ENCODE measurements at regions of chr4 and their contacts with region 1.

Region 1: GRCh38 chr4:166091912-166092510 is 219.0 kb downstream of the TLL1 start:
- DNase-seq: peak in 1 of 7 donors; percentile 2
- H3K4me3 ChIP-seq: no peak overlapping the region
- H3K27ac ChIP-seq: no peak overlapping the region
- H3K4me1 ChIP-seq: no peaks in the 10 kb centered on the region
- H3K27me3 ChIP-seq: no peaks in the 10 kb centered on the region
- CTCF ChIP-seq: peak; percentile 39 to 74 (median 62)
- POLR2A ChIP-seq: no peak

Region 2: GRCh38 chr4:165493359-165493758 is 598.7 kb before region 1 on chr4:
- intact Hi-C with region 1: loop called in 1 of 2 experiments (anchors 5 kb)
- DNase-seq: peak; percentile 70 to 84 (median 75)
- H3K4me3 ChIP-seq: peak overlapping the region in 1 of 4 donors; percentile 20
- H3K27ac ChIP-seq: no peak overlapping the region
- H3K4me1 ChIP-seq: peaks cover 0 to 4% of the 10 kb centered on the region in 2 donors
- H3K27me3 ChIP-seq: no peaks in the 10 kb centered on the region
- CTCF ChIP-seq: peak; percentile 28 to 71 (median 61)
- POLR2A ChIP-seq: no peak

Region 3: GRCh38 chr4:165537028-165537648 is 554.9 kb before region 1 on chr4:
- intact Hi-C with region 1: loop called (anchors 2 to 10 kb)
- DNase-seq: peak in 2 of 7 donors; percentile 8 to 11
- H3K4me3 ChIP-seq: no peak overlapping the region
- H3K27ac ChIP-seq: no peak overlapping the region
- H3K4me1 ChIP-seq: no peaks in the 10 kb centered on the region
- H3K27me3 ChIP-seq: peaks cover 5% of the 10 kb centered on the region
- CTCF ChIP-seq: peak; percentile 50 to 74 (median 70)
- POLR2A ChIP-seq: no peak